Naive thymus-derived CD8-positive, alpha-beta T cell (primary cell): ENCODE measurements at regions of chr10 and their contacts with region 1.

Region 1: GRCh38 chr10:110803830-110804338 is 67.8 kb upstream of the PDCD4 start:
- DNase-seq: peak; percentile 19 to 69 (median 38)
- ATAC-seq: peak; percentile 46 to 69
- H3K4me3 Mint-ChIP-seq: peak overlapping the region; percentile 23 to 71 (median 49)
- H3K27ac Mint-ChIP-seq: peak overlapping the region; percentile 85 to 99 (median 94)
- H3K4me1 Mint-ChIP-seq: peaks cover 23 to 65% (median 38%) of the 10 kb centered on the region in 4 donors
- H3K27me3 Mint-ChIP-seq: no peaks in the 10 kb centered on the region

Region 2: DNA sequence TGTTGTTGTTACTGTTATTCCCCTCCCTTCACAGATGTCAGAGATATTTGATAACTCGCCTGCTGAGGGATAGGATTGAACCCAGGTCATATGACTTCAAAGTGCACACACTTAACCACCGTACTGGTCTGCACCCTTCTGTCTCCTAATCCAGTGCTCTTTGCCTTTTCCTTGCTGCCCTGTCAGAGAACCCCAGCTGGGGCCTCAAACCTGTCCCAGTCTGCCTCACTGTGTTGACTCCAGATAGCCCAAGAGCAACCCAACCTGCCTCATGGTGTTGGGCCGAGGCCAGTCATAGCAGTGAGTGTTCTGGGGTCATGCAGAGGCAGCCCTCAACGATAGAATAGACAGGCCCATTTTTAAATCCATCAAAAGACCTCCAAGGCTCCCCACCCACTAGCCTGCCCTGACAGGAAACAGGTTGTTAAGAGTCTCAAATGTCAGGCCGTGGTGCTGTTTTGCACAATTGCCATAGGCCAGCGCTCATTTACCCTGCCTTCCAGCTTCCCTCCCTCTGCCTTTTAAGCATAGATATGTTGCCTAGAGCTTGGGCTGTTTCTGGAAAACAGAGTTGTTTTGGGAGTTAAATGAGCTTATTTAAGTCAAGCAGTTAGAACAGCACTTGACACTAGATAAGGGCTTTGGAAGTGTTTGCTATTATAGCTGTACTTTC is 30.9 kb after region 1 on chr10:
- POLR2A ChIA-PET with region 1: interaction called, 12 read pairs
- DNase-seq: peak in 9 of 10 donors; percentile 29 to 86 (median 66)
- ATAC-seq: peak; percentile 92 to 94
- H3K4me3 Mint-ChIP-seq: peak overlapping the region; percentile 46 to 83 (median 67)
- H3K27ac Mint-ChIP-seq: peak overlapping the region; percentile 98 to 100 (median 98)
- H3K4me1 Mint-ChIP-seq: peaks cover 27 to 57% (median 52%) of the 10 kb centered on the region in 4 donors
- H3K27me3 Mint-ChIP-seq: no peaks in the 10 kb centered on the region

Region 3: DNA sequence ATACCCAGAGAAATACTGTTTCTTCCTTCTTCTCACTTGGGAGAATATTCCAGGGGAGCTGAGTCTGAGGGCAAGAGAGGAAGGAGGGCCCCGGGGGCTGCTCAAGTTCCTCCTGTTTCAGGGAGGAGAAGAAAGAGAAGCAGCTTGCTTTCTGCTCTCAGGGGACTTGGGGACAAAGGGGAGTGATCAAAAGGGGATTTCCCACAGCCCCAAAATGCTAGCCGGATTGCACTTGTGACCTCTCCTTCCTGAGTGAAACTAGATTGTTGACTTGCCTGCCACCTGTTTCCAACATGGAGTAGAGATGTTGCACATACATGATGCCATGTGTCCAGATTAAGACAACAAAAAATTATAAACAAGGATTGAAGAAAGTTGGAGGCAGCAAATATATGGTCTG is 39.1 kb after region 1 on chr10:
- POLR2A ChIA-PET with region 1: interaction called, 10 read pairs
- DNase-seq: peak in 7 of 10 donors; percentile 37 to 57 (median 43)
- ATAC-seq: peak; percentile 84 to 92
- H3K4me3 Mint-ChIP-seq: peak overlapping the region in 9 of 10 donors; percentile 26 to 57 (median 40)
- H3K27ac Mint-ChIP-seq: peak overlapping the region; percentile 68 to 94 (median 84)
- H3K4me1 Mint-ChIP-seq: peaks cover 28 to 73% (median 62%) of the 10 kb centered on the region in 4 donors
- H3K27me3 Mint-ChIP-seq: no peaks in the 10 kb centered on the region

Region 4: DNA sequence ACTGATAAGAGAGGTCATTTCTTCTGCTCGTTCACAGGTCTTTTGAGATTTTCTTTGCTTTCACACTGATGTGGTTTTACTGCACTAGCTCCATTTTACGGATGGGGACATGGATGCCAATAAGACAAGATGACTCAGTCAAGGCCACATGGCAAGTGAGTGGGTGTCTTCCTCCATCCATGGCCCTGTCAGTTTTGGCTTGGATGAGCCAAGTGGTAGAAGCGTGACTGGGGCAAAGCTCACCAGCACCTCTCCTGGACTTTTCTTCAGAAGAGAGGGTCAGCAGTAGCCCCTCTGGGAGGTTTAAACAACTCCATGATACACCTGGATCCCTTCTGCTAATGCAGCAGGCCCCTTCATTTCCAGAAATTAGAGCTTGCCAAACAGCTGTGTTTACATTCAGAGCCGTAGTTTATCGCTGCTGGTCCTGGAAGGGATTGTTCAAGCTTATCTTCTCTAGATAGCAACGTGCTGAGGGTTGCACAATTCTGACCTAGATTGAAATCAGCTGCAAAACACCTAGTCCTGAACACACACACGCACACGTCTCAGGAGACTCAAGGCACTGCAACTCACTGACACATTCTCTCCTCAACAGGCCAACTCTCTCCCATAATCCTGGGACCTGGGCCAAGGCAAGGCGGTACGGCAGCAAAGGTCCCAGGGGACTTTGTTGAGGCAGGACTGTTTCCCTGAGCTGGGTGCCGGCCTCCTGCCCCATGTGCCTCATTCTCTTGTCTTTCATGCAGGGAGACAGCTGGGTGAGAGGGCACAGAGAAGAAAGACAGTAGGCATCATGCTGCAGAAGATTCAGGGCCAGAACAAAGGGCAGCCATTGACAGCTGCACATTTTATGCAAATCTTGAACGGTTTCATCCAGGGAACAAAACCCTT is 53.6 kb after region 1 on chr10:
- POLR2A ChIA-PET with region 1: interaction called, 30 read pairs
- DNase-seq: no peak
- ATAC-seq: no peak
- H3K4me3 Mint-ChIP-seq: peak overlapping the region in 8 of 10 donors; percentile 37 to 67 (median 45)
- H3K27ac Mint-ChIP-seq: peak overlapping the region; percentile 49 to 100 (median 98)
- H3K4me1 Mint-ChIP-seq: peaks cover 39 to 90% (median 86%) of the 10 kb centered on the region in 4 donors
- H3K27me3 Mint-ChIP-seq: no peaks in the 10 kb centered on the region

Region 5: DNA sequence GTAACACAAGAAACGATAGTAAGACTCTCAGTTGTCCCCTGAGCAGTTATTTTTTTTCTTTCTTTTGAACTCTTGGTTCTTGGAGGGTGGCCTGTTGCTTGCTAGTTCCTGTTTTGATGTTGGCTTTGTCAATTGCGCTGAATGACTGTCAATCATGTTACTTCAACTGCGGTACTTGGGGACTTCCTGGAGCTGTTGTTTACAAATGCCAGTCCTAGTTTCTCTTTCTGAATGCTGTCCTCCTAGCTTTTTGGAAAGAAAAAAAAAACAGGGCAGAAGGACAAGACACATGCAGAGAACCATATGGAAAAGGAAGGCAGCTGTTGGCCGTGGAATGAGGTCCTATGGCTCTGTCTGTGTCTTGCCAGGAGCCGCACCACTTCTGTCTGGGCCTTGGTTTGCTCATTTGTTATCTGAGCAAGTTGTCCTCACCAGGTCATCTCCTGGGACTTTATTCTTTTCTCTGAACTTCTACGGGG is 60.8 kb after region 1 on chr10:
- POLR2A ChIA-PET with region 1: interaction called, 30 read pairs
- DNase-seq: peak in 9 of 10 donors; percentile 48 to 90 (median 80)
- ATAC-seq: peak; percentile 65 to 73
- H3K4me3 Mint-ChIP-seq: peak overlapping the region; percentile 62 to 94 (median 82)
- H3K27ac Mint-ChIP-seq: peak overlapping the region; percentile 97 to 100 (median 99)
- H3K4me1 Mint-ChIP-seq: peaks cover 60 to 100% (median 98%) of the 10 kb centered on the region in 4 donors
- H3K27me3 Mint-ChIP-seq: no peaks in the 10 kb centered on the region

Region 6: GRCh38 chr10:110871298-110872084 is 67.6 kb after region 1 on chr10 and contains the start of gene PDCD4:
- POLR2A ChIA-PET with region 1: interaction called, 31 read pairs
- DNase-seq: peak; percentile 90 to 95 (median 92)
- ATAC-seq: peak; percentile 60 to 67
- H3K4me3 Mint-ChIP-seq: peak within 1 kb of the TSS; percentile 79 to 99 (median 96)
- H3K27ac Mint-ChIP-seq: peak within 1 kb of the TSS; percentile 97 to 100 (median 99)
- H3K4me1 Mint-ChIP-seq: peaks cover 34 to 81% (median 65%) of the 10 kb centered on the region in 4 donors
- H3K27me3 Mint-ChIP-seq: no peaks in the 10 kb centered on the region
- polyA plus RNA-seq, gene PDCD4: 318 to 385 (median 341) TPM

Region 7: GRCh38 chr10:110918643-110919363 is 114.9 kb after region 1 on chr10 and contains the start of gene BBIP1:
- POLR2A ChIA-PET with region 1: interaction called, 14 read pairs
- DNase-seq: peak in 1 of 10 donors; percentile 89
- ATAC-seq: peak; percentile 89 to 94
- H3K4me3 Mint-ChIP-seq: peak within 1 kb of the TSS; percentile 89 to 100 (median 98)
- H3K27ac Mint-ChIP-seq: peak within 1 kb of the TSS; percentile 99 to 100 (median 100)
- H3K4me1 Mint-ChIP-seq: peaks cover 12 to 60% (median 45%) of the 10 kb centered on the region in 4 donors
- H3K27me3 Mint-ChIP-seq: no peaks in the 10 kb centered on the region
- polyA plus RNA-seq, gene BBIP1: 25.1 to 29.7 (median 29.0) TPM